ENCODE measurements at regions of chr14 and their contacts with region 1.

Region 1: DNA sequence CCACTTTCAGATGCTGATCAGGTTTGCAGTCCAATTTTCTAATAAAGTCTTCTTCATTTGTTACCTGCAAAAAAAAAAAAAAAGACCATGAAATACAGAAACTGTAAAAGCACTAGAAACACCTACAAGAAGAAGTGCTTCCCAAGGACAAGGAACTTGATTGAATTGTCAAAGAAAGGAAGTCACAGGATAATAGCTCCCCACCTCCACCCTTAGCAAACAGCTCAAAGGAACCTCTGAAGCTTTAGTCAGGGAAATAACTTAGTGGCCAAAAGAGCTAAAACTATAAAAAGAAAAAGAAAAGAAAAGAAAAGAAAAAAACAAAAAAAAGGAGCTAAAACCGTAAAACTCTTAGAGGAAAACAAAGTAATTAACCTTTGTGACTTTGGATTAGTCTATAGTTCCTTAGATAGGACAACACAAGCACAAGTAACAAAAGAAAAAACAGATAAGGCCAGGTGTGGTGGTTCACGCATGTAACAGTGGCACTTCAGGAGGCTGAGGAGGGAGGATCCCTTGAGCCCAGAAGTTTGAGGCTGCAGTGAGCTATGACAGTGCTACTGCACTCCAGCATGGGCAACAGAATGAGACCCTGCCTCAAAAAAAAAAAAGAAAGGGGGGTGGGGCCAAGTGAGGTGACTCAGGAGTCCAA is 28.5 kb downstream of the ZFYVE1 start:
- DNase-seq: no peak
- ATAC-seq: no peak
- H3K4me3 Mint-ChIP-seq: no peak overlapping the region
- H3K27ac Mint-ChIP-seq: no peak overlapping the region
- H3K4me1 Mint-ChIP-seq: peaks cover 24% of the 10 kb centered on the region
- H3K27me3 Mint-ChIP-seq: no peaks in the 10 kb centered on the region
- CTCF ChIP-seq: no peak

Region 2: GRCh38 chr14:73069585-73069984 is 71.2 kb after region 1 on chr14:
- CTCF ChIA-PET with region 1: no interaction called
- POLR2A ChIA-PET with region 1: interaction called, 11 read pairs
- DNase-seq: no peak
- ATAC-seq: no peak
- H3K4me3 Mint-ChIP-seq: no peak overlapping the region
- H3K27ac Mint-ChIP-seq: no peak overlapping the region
- H3K4me1 Mint-ChIP-seq: peaks cover 18% of the 10 kb centered on the region
- H3K27me3 Mint-ChIP-seq: no peaks in the 10 kb centered on the region
- CTCF ChIP-seq: no peak

Measured in WTC11 (cell line).